ENCODE measurements at regions of chr4 and their contacts with region 1.

Region 1: DNA sequence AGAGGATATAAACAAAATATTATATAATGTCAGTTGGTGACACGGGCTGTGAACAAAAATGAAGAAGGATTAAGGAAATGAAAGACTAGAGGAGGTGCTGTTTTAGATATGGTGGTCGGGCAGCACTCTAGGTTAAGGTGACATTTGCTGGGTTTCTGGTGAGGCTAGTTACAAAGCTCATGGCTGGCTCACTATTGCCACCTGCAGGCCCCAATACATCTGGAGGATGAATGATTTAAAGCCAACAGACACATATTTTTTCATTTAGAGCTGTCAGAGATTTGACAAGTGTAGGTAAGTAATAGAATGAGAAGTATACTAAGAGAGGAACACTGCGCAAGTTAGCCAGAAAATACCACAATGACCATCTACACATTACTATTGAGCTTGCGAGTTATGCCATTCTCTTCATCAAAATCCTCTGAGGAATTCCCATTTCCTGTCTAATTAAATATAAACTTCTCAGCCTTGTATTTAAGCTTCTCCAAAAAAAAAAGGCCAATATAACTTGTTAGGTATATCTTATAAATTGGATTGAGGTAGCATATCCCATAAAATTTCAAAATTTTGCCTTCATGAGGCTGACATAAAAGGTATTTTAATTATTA is 6.4 kb upstream of the FGG start:
- DNase-seq: peak; percentile 46
- CTCF ChIP-seq: peak; percentile 70

Region 2: DNA sequence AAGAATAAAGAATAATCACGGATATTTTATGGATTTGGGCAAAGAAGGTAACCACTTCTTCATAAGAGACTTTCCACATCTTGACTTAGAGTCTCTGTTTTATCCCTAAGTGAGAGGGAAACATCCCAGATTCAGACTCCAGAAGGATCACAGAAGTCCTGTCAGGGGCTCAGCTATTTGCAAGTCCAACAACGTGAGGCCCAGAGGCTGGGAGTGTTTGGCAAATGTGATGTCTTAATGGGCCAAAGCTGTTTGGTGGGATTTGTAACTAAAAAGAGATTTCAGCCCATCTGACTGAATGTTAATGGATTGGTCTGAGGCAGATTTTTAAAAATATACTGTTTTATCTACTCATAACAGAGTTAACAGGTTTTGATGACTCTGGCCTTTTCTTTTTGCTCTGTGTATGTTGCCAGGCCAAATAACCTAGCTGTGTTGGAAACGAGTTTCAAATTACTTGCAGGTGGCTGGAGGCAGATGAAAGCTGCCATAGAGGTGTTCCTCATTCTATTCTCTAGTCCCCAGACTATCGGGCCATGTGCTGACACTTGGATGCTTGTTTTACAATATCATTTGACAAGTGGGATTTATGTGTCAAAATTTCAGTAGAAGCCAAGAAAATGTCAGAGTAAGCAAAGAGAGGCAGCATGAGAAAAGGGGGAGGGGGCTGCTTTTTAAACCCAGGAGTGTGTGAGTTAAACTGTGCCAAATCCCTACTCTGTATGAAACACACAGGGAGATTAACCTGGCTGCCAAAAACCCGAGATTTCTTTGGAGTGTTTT is 458.1 kb before region 1 on chr4:
- CTCF ChIA-PET with region 1: no interaction called
- POLR2A ChIA-PET with region 1: no interaction called
- DNase-seq: no peak
- CTCF ChIP-seq: no peak

Region 3: GRCh38 chr4:154526151-154526550 is 92.7 kb before region 1 on chr4:
- CTCF ChIA-PET with region 1: no interaction called
- POLR2A ChIA-PET with region 1: no interaction called
- DNase-seq: no peak
- CTCF ChIP-seq: no peak

Region 4: DNA sequence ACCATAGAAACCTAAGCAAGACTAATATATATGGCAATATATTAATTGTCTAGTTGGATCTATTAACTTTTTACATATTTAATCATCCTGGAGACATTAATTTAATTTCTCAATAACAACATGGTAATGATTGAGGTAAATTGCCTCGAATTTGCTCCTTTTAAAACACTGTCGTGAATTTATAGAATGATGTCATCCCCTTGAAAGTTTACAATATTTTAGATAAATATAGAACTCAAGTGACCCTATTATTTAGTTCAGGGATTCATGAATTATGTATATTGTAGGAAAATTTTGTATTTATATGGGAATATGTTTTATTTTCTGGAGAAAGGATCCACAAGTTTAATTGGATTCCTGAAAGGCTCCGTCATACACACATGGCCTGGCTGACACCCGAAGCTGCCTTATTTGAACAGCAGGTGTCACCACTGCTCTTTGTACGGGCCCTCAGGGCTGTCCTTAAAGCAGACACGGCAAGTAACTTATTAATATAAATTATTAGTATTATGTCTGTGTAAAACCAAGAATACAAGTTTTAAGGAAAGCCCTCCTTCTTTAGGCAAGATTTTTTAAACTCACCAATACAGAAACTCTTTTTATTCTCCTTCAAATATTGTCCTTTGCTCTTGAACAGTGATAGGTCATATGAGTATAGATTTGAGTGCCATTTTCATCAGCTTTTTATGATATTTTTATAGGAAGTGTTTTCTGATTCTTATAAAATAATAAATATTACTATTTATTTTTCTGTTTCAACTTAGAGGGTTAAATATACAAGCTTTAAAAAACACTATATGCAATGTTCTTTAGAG is 66.7 kb before region 1 on chr4:
- CTCF ChIA-PET with region 1: interaction called, 550 read pairs
- POLR2A ChIA-PET with region 1: no interaction called
- DNase-seq: peak; percentile 57
- CTCF ChIP-seq: peak; percentile 77

Region 5: GRCh38 chr4:154566639-154567204 is 52.1 kb before region 1 on chr4:
- CTCF ChIA-PET with region 1: interaction called, 15 read pairs
- POLR2A ChIA-PET with region 1: no interaction called
- DNase-seq: no peak
- CTCF ChIP-seq: no peak

Region 6: DNA sequence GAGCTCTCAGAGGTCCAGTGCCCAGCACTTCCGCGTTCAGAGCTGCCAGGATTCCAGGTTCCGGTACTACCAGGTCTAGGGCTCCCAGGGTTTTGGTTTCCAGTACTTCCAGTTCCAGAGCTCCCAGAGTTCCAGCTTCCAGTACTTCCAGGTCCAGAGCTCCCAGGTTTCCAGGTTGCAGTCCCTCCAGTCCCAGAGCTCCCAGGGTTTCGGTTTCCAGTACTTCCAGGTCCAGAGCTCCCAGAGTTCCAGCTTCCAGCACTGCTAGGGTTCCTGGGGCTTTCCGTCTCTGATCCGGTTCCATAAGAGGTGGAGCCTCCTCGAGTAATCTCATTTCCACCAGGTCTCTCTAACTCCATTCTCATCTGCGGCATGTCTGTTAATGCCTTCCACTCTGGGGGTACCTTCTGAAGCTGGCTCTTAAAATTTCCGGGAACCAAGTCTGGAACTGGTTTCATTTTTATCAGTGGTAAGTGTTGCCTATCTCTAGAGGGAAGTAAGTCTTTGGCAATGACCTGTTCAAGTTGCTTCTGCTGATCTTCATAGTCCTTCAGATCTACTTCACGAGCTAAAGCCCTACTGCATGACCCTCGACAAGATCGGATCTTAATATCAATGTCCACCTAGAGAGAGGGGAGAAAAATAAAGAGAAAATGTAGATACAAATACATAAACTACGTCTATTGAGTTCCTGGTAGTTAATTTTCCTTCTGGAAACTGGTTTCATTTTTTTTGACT is 32.3 kb before region 1 on chr4:
- CTCF ChIA-PET with region 1: interaction called, 14 read pairs
- POLR2A ChIA-PET with region 1: no interaction called
- DNase-seq: no peak
- CTCF ChIP-seq: no peak

Region 7: DNA sequence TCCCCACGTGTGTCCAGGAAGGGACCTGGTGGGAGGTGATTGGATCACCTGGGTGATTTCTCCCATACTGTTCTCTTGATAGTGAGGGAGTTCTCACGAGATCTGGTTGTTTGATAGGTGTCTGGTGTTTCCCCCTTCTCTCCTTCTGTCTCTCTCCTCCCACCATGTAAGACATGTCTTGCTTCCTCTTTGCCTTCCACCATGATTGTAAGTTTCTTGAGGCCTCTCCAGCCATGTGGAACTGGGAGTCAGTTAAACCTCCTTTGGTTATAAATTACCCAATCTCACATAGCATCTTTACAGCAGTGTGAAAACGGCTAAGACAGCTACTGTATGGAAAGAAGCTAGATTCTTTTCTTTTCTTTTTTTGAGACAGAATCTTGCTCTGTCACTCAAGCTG is 15.2 kb after region 1 on chr4:
- CTCF ChIA-PET with region 1: interaction called, 32 read pairs
- POLR2A ChIA-PET with region 1: no interaction called
- DNase-seq: no peak
- CTCF ChIP-seq: no peak

Region 8: GRCh38 chr4:155207534-155208257 is 588.9 kb after region 1 on chr4:
- CTCF ChIA-PET with region 1: no interaction called
- POLR2A ChIA-PET with region 1: no interaction called
- DNase-seq: no peak
- CTCF ChIP-seq: no peak